Cardiac septum (tissue), 1 donor: ENCODE measurements at regions of chr11 and their contacts with region 1.

Region 1: GRCh38 chr11:46006418-46007070 is 84.1 kb downstream of the LARGE2 start:
- DNase-seq: no peak

Region 2: GRCh38 chr11:45872513-45873356 is 133.8 kb before region 1 on chr11:
- intact Hi-C with region 1: loop called (anchors 5 kb)
- DNase-seq: no peak

Region 3: DNA sequence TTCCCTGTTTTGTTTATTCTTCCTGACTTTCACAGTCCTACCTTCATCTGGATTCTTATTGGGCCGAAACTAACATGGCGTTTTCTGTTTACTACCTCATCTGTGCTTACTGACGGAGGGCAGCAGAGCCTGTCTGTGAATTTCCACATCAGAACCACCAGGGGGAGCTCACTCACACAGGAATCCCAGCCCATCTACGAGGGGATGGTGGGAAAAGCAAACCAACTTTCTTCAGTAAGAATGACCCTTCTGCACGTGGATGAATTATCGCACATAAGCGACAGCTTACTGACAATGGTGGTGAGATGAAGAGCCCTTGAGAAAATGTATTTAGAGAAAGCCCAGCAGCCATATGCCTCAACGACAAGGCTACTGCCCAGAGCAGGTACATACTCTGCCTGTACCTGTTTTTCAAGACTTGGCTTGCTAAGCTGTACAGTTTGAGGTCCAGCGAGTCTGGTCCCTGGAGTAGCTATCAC is 41.6 kb before region 1 on chr11:
- intact Hi-C with region 1: loop called (anchors 1 kb)
- DNase-seq: peak; percentile 77

Region 4: GRCh38 chr11:46160100-46160499 is 153.6 kb after region 1 on chr11:
- intact Hi-C with region 1: no loop called
- DNase-seq: no peak